Endothelial cell of umbilical vein (primary cell): ENCODE measurements at regions of chr12 and their contacts with region 1.

Region 1: GRCh38 chr12:89451841-89452251 is 72.8 kb downstream of the GALNT4 start:
- DNase-seq: peak; percentile 74
- H3K4me3 ChIP-seq: no peak overlapping the region
- H3K27ac ChIP-seq: peak overlapping the region; percentile 65
- H3K4me1 ChIP-seq: peaks cover 53% of the 10 kb centered on the region
- H3K27me3 ChIP-seq: no peaks in the 10 kb centered on the region
- CTCF ChIP-seq: no peak
- POLR2A ChIP-seq: peak; percentile 15

Region 2: DNA sequence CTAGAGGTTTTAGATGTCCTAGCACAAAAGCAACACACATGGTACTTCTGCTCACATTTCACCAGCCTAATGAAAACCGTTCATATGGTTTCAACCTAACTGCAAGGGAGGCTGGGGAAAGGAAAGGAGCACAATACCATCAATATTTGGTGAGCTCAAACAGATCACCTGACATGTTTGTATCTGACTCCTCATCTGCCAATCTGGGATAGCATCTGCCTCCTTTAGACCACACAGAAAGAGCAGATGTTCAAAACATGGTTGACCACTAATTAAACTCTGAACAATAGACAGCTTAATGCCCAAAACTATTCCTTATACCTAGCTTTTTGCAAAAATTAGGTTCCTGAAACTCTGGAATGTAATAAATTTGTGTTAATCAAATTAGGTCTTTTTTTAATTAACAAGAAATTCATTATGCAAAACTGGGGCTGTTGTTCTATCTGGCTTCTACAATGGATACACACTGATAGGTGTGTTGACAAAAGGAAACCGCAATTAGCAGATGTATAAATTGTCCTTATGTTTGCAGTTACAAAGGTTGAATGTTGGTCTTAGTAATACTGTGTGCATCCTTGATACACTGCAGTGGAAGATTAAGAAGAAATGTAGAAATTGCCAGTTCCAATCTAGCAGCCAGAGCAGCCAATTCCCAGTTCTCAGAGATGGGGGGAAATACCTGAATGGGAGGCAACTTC is 188.8 kb before region 1 on chr12:
- CTCF ChIA-PET with region 1: no interaction called
- POLR2A ChIA-PET with region 1: no interaction called
- dilution Hi-C with region 1: no loop called
- intact Hi-C with region 1: no loop called
- DNase-seq: no peak
- H3K4me3 ChIP-seq: no peak overlapping the region
- H3K27ac ChIP-seq: no peak overlapping the region
- H3K4me1 ChIP-seq: peaks cover 6% of the 10 kb centered on the region
- H3K27me3 ChIP-seq: no peaks in the 10 kb centered on the region
- CTCF ChIP-seq: no peak
- POLR2A ChIP-seq: no peak

Region 3: GRCh38 chr12:89389755-89390661 is 61.8 kb before region 1 on chr12:
- CTCF ChIA-PET with region 1: interaction called, 4 read pairs
- POLR2A ChIA-PET with region 1: no interaction called
- dilution Hi-C with region 1: no loop called
- intact Hi-C with region 1: loop called (anchors 1 kb)
- DNase-seq: peak; percentile 89
- H3K4me3 ChIP-seq: peak overlapping the region in 1 of 3 experiments; percentile 6
- H3K27ac ChIP-seq: peak overlapping the region; percentile 80
- H3K4me1 ChIP-seq: peaks cover 33% of the 10 kb centered on the region
- H3K27me3 ChIP-seq: no peaks in the 10 kb centered on the region
- CTCF ChIP-seq: no peak
- POLR2A ChIP-seq: no peak

Region 4: DNA sequence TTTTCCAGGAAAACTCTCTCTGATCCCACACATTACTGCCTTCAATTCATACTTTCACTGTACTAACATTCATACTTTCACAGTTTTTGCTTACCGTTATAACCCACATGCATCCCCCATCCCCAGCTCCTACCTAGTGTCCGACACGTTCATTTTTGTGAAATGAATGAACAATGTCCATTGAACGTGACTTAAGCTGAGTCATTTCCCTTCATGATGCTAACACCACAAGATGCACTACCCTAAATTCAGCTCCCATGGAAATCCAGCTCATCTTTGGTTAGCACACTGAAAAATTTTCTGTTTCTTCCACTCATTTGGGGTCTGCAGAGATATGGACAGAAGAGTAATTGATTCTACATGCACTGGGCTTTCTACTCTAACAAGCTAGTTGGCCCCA is 11.9 kb before region 1 on chr12:
- CTCF ChIA-PET with region 1: interaction called, 14 read pairs
- POLR2A ChIA-PET with region 1: interaction called, 9 read pairs
- dilution Hi-C with region 1: no loop called
- intact Hi-C with region 1: no loop called
- DNase-seq: peak; percentile 45
- H3K4me3 ChIP-seq: no peak overlapping the region
- H3K27ac ChIP-seq: peak overlapping the region; percentile 44
- H3K4me1 ChIP-seq: peaks cover 7% of the 10 kb centered on the region
- H3K27me3 ChIP-seq: no peaks in the 10 kb centered on the region
- CTCF ChIP-seq: no peak
- POLR2A ChIP-seq: no peak

Region 5: DNA sequence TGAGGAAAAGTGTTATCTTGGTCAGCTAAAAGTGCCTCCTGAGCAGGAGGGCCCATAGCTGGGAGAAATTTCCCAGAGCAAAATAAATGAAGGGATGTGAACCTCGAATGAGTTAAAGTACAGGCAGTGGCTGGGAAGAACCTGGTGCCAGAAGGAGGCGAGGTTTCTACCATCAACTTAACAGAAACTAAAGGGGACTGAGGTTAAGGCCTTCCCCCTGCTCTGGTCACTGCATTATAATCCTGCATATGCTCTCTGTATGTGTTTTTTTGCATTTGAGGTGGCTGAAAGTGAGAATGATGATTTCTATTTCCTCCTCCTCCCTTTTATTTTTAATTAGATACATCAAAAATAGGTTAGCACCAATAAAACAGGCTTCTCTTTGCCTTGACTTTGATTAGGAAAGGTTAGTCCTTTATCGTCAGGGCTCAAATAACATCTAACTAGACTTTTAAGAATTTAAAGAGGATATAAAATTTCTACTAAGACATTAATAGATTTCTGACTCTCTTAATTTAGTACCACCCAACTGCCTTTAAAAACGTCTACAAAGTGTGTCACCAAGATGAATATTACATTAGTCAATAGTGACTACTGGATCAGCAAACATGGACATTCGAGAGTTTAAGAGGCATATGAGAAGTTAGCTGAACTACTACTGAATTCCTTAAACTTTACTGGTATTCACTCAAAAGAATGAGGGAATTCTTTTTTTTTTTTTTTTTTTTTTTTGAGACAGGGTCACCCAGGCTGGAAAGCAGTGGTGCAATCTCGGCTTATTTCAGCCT is 23.6 kb after region 1 on chr12:
- CTCF ChIA-PET with region 1: no interaction called
- POLR2A ChIA-PET with region 1: no interaction called
- dilution Hi-C with region 1: no loop called
- intact Hi-C with region 1: no loop called
- DNase-seq: no peak
- H3K4me3 ChIP-seq: no peak overlapping the region
- H3K27ac ChIP-seq: no peak overlapping the region
- H3K4me1 ChIP-seq: peaks cover 6% of the 10 kb centered on the region
- H3K27me3 ChIP-seq: no peaks in the 10 kb centered on the region
- CTCF ChIP-seq: no peak
- POLR2A ChIP-seq: no peak

Region 6: DNA sequence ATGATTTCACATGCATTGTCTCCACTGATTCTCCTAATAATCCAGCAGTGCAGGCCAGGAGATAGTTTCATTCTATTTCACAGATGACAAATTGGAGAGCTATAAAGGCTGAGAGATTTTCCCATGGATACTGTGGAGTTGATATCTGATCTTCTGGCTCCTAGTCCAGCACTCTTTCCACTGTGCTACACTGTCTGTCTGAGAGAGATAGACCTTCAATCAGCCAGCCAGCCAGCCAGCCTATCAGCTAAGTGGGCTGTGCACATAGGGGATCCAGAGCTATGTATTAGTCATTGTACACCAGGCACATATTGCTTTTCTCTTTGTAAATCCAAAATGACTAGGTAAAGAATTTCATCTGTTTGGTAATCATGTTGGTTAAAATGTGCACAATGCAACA is 348.6 kb after region 1 on chr12:
- CTCF ChIA-PET with region 1: no interaction called
- POLR2A ChIA-PET with region 1: no interaction called
- dilution Hi-C with region 1: no loop called
- intact Hi-C with region 1: no loop called
- DNase-seq: no peak
- H3K4me3 ChIP-seq: no peak overlapping the region
- H3K27ac ChIP-seq: no peak overlapping the region
- H3K4me1 ChIP-seq: no peaks in the 10 kb centered on the region
- H3K27me3 ChIP-seq: no peaks in the 10 kb centered on the region
- CTCF ChIP-seq: no peak
- POLR2A ChIP-seq: no peak